HepG2 (cell line): ENCODE measurements at regions of chr15 and their contacts with region 1.

Region 1: GRCh38 chr15:80804965-80805495 is 25.9 kb downstream of the CEMIP start:
- DNase-seq: peak; percentile 98
- ATAC-seq: peak; percentile 95
- H3K4me3 ChIP-seq: peak overlapping the region in 1 of 3 experiments; percentile 23; a peak in 2 of 6 replicates
- H3K27ac ChIP-seq: peak overlapping the region; percentile 59
- H3K4me1 ChIP-seq: peaks cover 41% of the 10 kb centered on the region
- H3K27me3 ChIP-seq: no peaks in the 10 kb centered on the region
- CTCF ChIP-seq: peak; percentile 27; the same call in 1 of the 2 replicates
- EP300 ChIP-seq: peak; percentile 58 to 90; a peak in 3 of 4 replicates
- POLR2A ChIP-seq: no peak
- RAD21 ChIP-seq: no peak

Region 2: DNA sequence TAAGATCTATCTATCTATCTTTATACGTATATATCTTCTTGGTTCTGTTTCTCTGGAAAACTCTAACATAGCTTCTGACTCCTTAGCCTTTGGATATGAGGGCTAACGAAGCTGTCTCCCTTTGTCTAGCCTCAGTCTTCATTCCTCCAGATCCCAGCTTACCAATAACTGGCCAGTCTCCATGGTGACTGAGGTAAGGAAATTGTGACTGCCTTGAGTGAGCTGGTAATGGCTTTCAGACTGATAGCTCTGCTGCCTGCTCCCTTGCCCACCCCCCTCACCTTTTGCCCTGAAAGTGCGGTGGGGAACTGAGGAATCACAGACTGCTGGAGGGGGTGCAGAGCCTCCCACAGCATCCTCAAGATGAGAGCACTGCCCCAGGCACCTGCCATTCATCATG is 175.7 kb before region 1 on chr15:
- CTCF ChIA-PET with region 1: no interaction called
- POLR2A ChIA-PET with region 1: no interaction called
- in situ Hi-C with region 1: no loop called
- intact Hi-C with region 1: no loop called
- DNase-seq: no peak
- ATAC-seq: no peak
- H3K4me3 ChIP-seq: no peak overlapping the region
- H3K27ac ChIP-seq: no peak overlapping the region
- H3K4me1 ChIP-seq: no peaks in the 10 kb centered on the region
- H3K27me3 ChIP-seq: peaks cover 3% of the 10 kb centered on the region in 2 experiments; a peak in 2 of 5 replicates
- CTCF ChIP-seq: no peak
- EP300 ChIP-seq: no peak
- POLR2A ChIP-seq: no peak
- RAD21 ChIP-seq: no peak

Region 3: GRCh38 chr15:80835338-80835737 is 30.3 kb after region 1 on chr15:
- CTCF ChIA-PET with region 1: no interaction called
- POLR2A ChIA-PET with region 1: interaction called, 56 read pairs
- in situ Hi-C with region 1: no loop called
- intact Hi-C with region 1: loop called (anchors 1 kb)
- DNase-seq: peak; percentile 50
- ATAC-seq: peak; percentile 35
- H3K4me3 ChIP-seq: no peak overlapping the region
- H3K27ac ChIP-seq: peak overlapping the region; percentile 20
- H3K4me1 ChIP-seq: peaks cover 92% of the 10 kb centered on the region
- H3K27me3 ChIP-seq: no peaks in the 10 kb centered on the region
- CTCF ChIP-seq: peak; percentile 51
- EP300 ChIP-seq: no peak
- POLR2A ChIP-seq: no peak
- RAD21 ChIP-seq: peak; percentile 60; the same call in 1 of the 2 replicates

Region 4: DNA sequence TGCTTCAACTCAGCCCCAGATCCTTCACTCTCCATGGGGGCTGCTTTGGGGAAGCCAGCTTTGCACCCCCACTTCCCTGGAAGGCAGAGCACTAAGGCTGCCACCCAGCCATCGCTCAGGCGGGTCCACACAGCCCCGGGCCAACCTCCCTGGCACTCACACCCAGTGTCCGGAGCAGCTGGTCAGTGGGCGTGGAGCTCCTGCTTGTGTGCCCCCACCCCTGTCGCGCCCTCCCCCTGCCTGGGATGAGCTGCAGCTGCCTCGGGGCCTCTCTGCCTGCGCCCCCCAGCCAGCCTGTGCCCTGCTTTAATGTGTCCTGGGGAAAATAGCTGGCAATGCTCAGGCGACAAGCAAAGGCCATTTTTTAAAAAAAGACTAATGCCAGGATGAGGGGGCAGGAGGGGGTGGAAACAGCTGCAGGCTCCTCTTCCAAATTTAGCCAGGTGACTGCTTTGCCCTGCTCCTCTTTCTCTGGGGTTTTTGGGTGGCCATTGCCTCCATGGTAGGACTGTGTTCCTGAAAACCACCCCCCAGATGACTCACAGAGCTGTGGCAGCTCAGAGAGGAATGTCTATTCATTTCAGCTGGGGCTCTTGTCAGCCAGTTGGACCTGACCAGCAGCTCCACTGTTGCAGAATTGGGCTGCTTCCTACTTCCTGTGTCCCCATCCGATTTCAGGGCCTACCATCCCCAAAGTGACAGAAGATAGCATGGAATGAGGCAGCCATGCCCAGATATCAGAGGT is 39.2 kb after region 1 on chr15:
- CTCF ChIA-PET with region 1: no interaction called
- POLR2A ChIA-PET with region 1: interaction called, 56 read pairs
- in situ Hi-C with region 1: no loop called
- intact Hi-C with region 1: loop called (anchors 1 kb)
- DNase-seq: peak; percentile 45
- ATAC-seq: peak; percentile 8; the same call in 1 of the 3 replicates
- H3K4me3 ChIP-seq: no peak overlapping the region
- H3K27ac ChIP-seq: no peak overlapping the region
- H3K4me1 ChIP-seq: peaks cover 83% of the 10 kb centered on the region
- H3K27me3 ChIP-seq: no peaks in the 10 kb centered on the region
- CTCF ChIP-seq: no peak
- EP300 ChIP-seq: no peak
- POLR2A ChIP-seq: no peak
- RAD21 ChIP-seq: no peak